Heart left ventricle (tissue), 16 donors: ENCODE measurements at regions of chr15 and their contacts with region 1.

Region 1: GRCh38 chr15:45333550-45333949 is 44.8 kb downstream of the GATM start:
- DNase-seq: peak; percentile 77 to 90 (median 84)
- ATAC-seq: peak; percentile 82 to 92 (median 88)
- H3K4me3 ChIP-seq: no peak overlapping the region
- H3K27ac ChIP-seq: peak overlapping the region in 7 of 12 donors; percentile 38 to 81 (median 56)
- H3K4me1 ChIP-seq: peaks cover 0 to 26% (median 12%) of the 10 kb centered on the region in 12 donors
- H3K27me3 ChIP-seq: no peaks in the 10 kb centered on the region
- CTCF ChIP-seq: no peak
- POLR2A ChIP-seq: no peak

Region 2: DNA sequence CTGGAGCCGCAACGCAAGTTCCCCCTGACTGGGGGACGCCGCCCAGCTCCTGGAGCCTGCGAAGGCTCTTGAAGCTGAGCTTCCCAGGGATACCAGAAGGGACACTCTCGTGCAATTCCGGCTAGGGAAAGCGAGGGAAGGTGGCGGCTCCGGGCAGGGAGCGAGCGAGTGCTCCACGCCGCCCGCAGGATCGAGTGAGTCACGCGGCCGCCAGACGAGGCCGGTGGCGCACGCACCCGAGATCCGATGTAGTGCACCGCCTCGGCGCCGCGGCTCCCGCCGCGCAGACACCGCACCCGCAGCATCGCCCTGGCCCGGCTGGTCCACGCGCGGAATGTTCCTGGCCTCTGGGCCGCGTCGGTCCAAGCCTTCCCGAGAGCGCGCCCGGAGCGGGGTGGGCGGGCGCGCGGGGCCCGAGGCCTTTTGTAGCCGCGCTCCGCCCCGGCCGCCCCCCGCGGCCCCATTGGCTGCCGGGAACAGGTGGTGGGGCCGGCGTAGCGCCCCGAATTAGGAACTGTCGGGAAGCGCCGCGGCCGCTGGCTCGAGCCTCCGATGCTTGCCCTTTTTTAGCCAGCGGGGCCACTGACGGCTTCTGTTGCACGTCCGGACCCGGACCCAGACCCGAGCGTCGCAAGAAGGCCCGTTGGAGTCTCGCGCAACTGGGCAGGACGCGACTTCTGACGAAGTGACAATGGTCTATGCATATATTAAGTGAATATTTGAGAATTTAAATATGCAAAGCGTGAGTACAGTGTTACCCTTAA is 44.8 kb after region 1 on chr15 and contains the start of gene GATM:
- intact Hi-C with region 1: loop called in 1 of 10 experiments (anchors 5 kb)
- DNase-seq: peak; percentile 83 to 92 (median 88)
- ATAC-seq: peak; percentile 84 to 95 (median 92)
- H3K4me3 ChIP-seq: peak within 1 kb of the TSS; percentile 42 to 74 (median 66)
- H3K27ac ChIP-seq: peak within 1 kb of the TSS; percentile 70 to 91 (median 82)
- H3K4me1 ChIP-seq: peaks cover 0 to 39% (median 19%) of the 10 kb centered on the region in 12 donors
- H3K27me3 ChIP-seq: peaks cover 0 to 35% (median 0%) of the 10 kb centered on the region in 9 donors
- CTCF ChIP-seq: peak in 11 of 12 donors; percentile 14 to 67 (median 40)
- POLR2A ChIP-seq: peak in 1 of 2 donors; percentile 95
- total RNA-seq, gene GATM: 12.9 to 121 (median 29.7) TPM

Region 3: DNA sequence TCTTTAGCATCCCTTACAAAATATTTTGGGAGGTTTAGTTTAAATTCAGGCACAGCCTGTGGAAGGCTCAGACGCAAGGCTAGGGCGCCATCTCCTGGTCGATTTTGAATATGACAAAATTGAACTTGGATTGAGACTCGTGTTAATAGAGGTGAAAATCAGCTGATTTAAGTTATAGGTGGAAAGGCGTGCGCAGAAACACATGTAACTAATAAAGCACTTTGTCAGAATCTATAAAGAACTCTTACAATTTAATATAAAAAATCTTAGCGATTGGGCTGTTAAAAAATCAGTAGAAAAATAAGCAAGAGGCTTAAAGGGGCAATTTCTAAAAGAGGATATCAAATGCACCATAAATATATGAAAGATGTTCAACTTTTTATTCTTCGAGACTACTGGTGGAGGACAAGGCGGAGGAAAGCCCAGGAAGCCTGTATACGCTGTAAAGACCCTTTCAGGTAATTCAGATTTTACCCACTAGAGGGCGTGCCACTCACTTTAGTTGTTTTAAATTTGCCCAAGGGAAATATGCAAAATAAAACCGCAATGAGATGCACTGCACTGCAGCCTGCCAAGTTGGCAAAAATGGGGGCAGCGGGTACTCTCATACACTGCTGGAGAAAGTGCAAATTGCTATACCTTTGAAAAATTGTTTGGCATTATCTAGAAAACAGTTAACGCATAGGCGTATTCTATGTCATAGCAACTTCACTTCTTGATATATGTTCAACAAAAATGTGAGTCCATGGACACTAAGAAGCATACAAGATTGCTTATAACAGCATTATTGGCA is 124.3 kb after region 1 on chr15:
- intact Hi-C with region 1: no loop called
- DNase-seq: peak in 4 of 5 donors; percentile 48 to 72 (median 60)
- ATAC-seq: peak; percentile 64 to 85 (median 76)
- H3K4me3 ChIP-seq: peak overlapping the region; percentile 5 to 65 (median 54)
- H3K27ac ChIP-seq: peak overlapping the region in 11 of 12 donors; percentile 44 to 81 (median 69)
- H3K4me1 ChIP-seq: peaks cover 0 to 49% (median 0%) of the 10 kb centered on the region in 12 donors
- H3K27me3 ChIP-seq: no peaks in the 10 kb centered on the region
- CTCF ChIP-seq: peak; percentile 62 to 80 (median 76)
- POLR2A ChIP-seq: no peak